T-cell (primary cell): ENCODE measurements at regions of chr18 and their contacts with region 1.

Region 1: GRCh38 chr18:3454365-3455089 is 4.6 kb downstream of the TGIF1 start:
- DNase-seq: peak in 21 of 35 experiments; percentile 16 to 74 (median 35)
- ATAC-seq: no peak
- H3K4me3 ChIP-seq: peak overlapping the region; percentile 35 to 50
- H3K4me3 Mint-ChIP-seq: peak overlapping the region; percentile 91 to 95 (median 94)
- H3K27ac ChIP-seq: peak overlapping the region; percentile 85
- H3K27ac Mint-ChIP-seq: peak overlapping the region; percentile 98
- H3K4me1 ChIP-seq: peaks cover 9 to 60% of the 10 kb centered on the region in 2 experiments
- H3K4me1 Mint-ChIP-seq: peaks cover 52 to 69% (median 69%) of the 10 kb centered on the region in 3 donors
- H3K27me3 ChIP-seq: no peaks in the 10 kb centered on the region
- H3K27me3 Mint-ChIP-seq: no peaks in the 10 kb centered on the region

Region 2: DNA sequence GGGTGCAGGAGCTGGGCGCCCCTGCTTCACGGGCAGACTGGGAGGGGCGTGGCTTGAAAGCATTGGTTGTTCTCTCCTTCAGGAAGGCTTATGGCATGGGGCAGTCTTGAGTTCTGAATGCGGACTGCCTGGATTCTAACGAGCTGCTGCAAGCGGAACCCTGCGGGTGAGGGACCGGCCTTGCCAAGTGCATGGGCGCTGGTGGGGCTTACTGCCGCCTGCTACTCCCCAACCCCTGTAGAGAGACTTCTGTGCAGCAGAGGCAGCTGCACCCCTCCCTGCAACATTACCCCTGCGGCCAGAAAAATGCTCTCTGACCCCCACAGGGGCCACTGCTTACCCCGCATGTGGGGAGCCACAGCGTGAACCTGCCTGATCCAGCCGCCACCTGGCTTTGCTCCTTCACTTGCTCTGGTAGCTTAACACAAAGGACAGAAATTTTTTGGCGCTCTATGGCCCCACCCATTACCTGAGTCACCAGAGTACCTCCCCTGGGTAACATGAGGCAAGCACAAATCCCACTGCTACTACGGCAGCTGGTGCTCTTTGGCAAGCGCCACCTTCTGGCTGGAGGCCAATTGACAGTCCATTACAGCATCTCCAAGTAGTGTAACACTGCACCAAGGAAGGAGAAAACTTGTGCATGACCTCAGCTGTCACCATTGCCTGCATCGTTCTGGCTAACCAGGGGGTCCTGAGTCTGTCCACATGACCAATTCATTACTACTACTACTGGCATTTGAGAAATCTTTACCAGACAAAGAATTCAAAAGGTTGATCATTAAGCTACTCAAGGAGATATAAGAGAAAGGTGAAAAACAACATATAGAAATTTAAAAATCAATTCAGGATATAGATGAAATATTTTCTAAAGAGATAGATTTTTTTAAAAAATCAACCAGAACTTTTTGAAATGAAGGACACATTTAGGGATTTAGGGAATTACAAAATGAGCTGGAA is 157.2 kb before region 1 on chr18:
- CTCF ChIA-PET with region 1: interaction called, 7 to 27 read pairs
- POLR2A ChIA-PET with region 1: interaction called, 5 to 9 read pairs
- DNase-seq: peak; percentile 84 to 95 (median 91)
- ATAC-seq: peak; percentile 95 to 100 (median 98)
- H3K4me3 ChIP-seq: peak overlapping the region; percentile 73 to 77
- H3K4me3 Mint-ChIP-seq: peak overlapping the region; percentile 93 to 94 (median 94)
- H3K27ac ChIP-seq: no peak overlapping the region
- H3K27ac Mint-ChIP-seq: peak overlapping the region; percentile 82 to 90
- H3K4me1 ChIP-seq: peaks cover 4 to 14% of the 10 kb centered on the region in 2 experiments
- H3K4me1 Mint-ChIP-seq: peaks cover 11 to 14% (median 13%) of the 10 kb centered on the region in 3 donors
- H3K27me3 ChIP-seq: peaks cover 0 to 4% of the 10 kb centered on the region in 2 experiments
- H3K27me3 Mint-ChIP-seq: peaks cover 29 to 32% of the 10 kb centered on the region in 2 donors

Region 3: GRCh38 chr18:3350566-3351527 is 103.7 kb before region 1 on chr18:
- CTCF ChIA-PET with region 1: no interaction called
- POLR2A ChIA-PET with region 1: no interaction called
- DNase-seq: no peak
- ATAC-seq: no peak
- H3K4me3 ChIP-seq: no peak overlapping the region
- H3K4me3 Mint-ChIP-seq: no peak overlapping the region
- H3K27ac ChIP-seq: no peak overlapping the region
- H3K27ac Mint-ChIP-seq: no peak overlapping the region
- H3K4me1 ChIP-seq: no peaks in the 10 kb centered on the region
- H3K4me1 Mint-ChIP-seq: peaks cover 2 to 4% (median 2%) of the 10 kb centered on the region in 3 donors
- H3K27me3 ChIP-seq: peaks cover 0 to 15% of the 10 kb centered on the region in 2 experiments
- H3K27me3 Mint-ChIP-seq: peaks cover 3 to 5% of the 10 kb centered on the region in 2 donors

Region 4: GRCh38 chr18:3441290-3441689 is 13.2 kb before region 1 on chr18:
- CTCF ChIA-PET with region 1: interaction called, 5 to 31 read pairs
- POLR2A ChIA-PET with region 1: interaction called, 3 to 20 read pairs
- DNase-seq: peak in 5 of 35 experiments; percentile 4 to 56 (median 14)
- ATAC-seq: peak in 3 of 4 experiments; percentile 52 to 82 (median 58)
- H3K4me3 ChIP-seq: no peak overlapping the region
- H3K4me3 Mint-ChIP-seq: no peak overlapping the region
- H3K27ac ChIP-seq: no peak overlapping the region
- H3K27ac Mint-ChIP-seq: no peak overlapping the region
- H3K4me1 ChIP-seq: no peaks in the 10 kb centered on the region
- H3K4me1 Mint-ChIP-seq: peaks cover 0 to 6% (median 4%) of the 10 kb centered on the region in 3 donors
- H3K27me3 ChIP-seq: no peaks in the 10 kb centered on the region
- H3K27me3 Mint-ChIP-seq: no peaks in the 10 kb centered on the region

Region 5: DNA sequence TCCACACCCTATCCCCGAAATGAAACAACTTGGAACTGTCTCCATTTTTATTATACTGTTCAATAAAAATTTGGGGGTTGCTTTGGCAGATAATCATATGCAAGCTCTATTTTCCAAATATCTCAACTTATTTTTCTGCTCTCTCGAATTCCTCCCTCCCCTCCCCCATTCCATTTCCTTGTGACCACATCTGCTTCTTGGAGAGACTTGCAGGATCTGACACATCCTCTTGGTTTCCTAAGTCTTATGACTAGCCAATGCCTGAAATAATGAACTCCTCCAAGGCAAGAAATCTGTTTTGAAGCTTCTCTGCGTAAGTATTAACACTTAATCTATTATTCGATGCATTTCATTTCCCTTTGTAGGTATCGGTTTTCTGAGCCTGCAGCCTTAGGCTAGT is 11.5 kb after region 1 on chr18:
- CTCF ChIA-PET with region 1: interaction called, 10 to 25 read pairs
- POLR2A ChIA-PET with region 1: interaction called, 3 to 10 read pairs
- DNase-seq: no peak
- ATAC-seq: no peak
- H3K4me3 ChIP-seq: no peak overlapping the region
- H3K4me3 Mint-ChIP-seq: peak overlapping the region in 1 of 3 donors; percentile 12
- H3K27ac ChIP-seq: no peak overlapping the region
- H3K27ac Mint-ChIP-seq: peak overlapping the region; percentile 73 to 75
- H3K4me1 ChIP-seq: peaks cover 10 to 13% of the 10 kb centered on the region in 2 experiments
- H3K4me1 Mint-ChIP-seq: peaks cover 16 to 21% (median 17%) of the 10 kb centered on the region in 3 donors
- H3K27me3 ChIP-seq: no peaks in the 10 kb centered on the region
- H3K27me3 Mint-ChIP-seq: no peaks in the 10 kb centered on the region

Region 6: GRCh38 chr18:3585656-3586509 is 131.4 kb after region 1 on chr18:
- CTCF ChIA-PET with region 1: interaction called, 7 to 23 read pairs
- POLR2A ChIA-PET with region 1: no interaction called
- DNase-seq: peak in 34 of 35 experiments; percentile 27 to 83 (median 58)
- ATAC-seq: peak in 3 of 4 experiments; percentile 65 to 87 (median 74)
- H3K4me3 ChIP-seq: no peak overlapping the region
- H3K4me3 Mint-ChIP-seq: no peak overlapping the region
- H3K27ac ChIP-seq: no peak overlapping the region
- H3K27ac Mint-ChIP-seq: no peak overlapping the region
- H3K4me1 ChIP-seq: peaks cover 0 to 8% of the 10 kb centered on the region in 2 experiments
- H3K4me1 Mint-ChIP-seq: peaks cover 9 to 25% (median 13%) of the 10 kb centered on the region in 3 donors
- H3K27me3 ChIP-seq: peaks cover 0 to 3% of the 10 kb centered on the region in 2 experiments
- H3K27me3 Mint-ChIP-seq: no peaks in the 10 kb centered on the region

Region 7: GRCh38 chr18:3665780-3666525 is 211.4 kb after region 1 on chr18:
- CTCF ChIA-PET with region 1: interaction called, 3 to 15 read pairs
- POLR2A ChIA-PET with region 1: interaction called in 1 of 2 experiments, 3 read pairs
- DNase-seq: peak; percentile 29 to 86 (median 64)
- ATAC-seq: peak; percentile 77 to 89 (median 84)
- H3K4me3 ChIP-seq: peak overlapping the region in 1 of 2 donors; percentile 0
- H3K4me3 Mint-ChIP-seq: peak overlapping the region in 2 of 3 donors; percentile 34 to 40
- H3K27ac ChIP-seq: no peak overlapping the region
- H3K27ac Mint-ChIP-seq: no peak overlapping the region
- H3K4me1 ChIP-seq: peaks cover 3 to 6% of the 10 kb centered on the region in 2 experiments
- H3K4me1 Mint-ChIP-seq: peaks cover 4 to 7% (median 6%) of the 10 kb centered on the region in 3 donors
- H3K27me3 ChIP-seq: peaks cover 0 to 3% of the 10 kb centered on the region in 2 experiments
- H3K27me3 Mint-ChIP-seq: no peaks in the 10 kb centered on the region